ENCODE measurements at regions of chr4 and their contacts with region 1.

Region 1: DNA sequence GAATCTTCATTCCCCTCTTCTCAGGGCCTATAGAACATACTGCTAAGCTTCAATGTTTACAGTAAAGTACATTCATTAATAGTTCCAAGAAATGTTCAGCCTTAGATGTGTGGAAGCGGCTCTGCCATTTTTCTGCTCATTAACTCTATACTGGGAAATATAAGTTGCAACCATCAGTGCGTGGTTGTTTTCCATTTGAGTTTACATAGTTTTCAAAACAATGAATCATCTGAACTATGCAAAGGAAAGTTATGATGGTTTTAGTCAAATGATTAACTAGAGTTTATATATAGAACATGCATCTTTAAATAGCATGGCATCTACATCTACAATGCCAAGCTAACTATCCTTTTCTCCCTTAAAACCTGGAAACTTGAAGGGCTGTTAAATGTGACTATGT is 29.6 kb downstream of the LEF1 start:
- DNase-seq: peak; percentile 58
- H3K4me3 Mint-ChIP-seq: peak overlapping the region; percentile 84
- H3K27ac Mint-ChIP-seq: peak overlapping the region; percentile 97
- H3K4me1 Mint-ChIP-seq: peaks cover 84% of the 10 kb centered on the region
- H3K27me3 Mint-ChIP-seq: no peaks in the 10 kb centered on the region

Region 2: DNA sequence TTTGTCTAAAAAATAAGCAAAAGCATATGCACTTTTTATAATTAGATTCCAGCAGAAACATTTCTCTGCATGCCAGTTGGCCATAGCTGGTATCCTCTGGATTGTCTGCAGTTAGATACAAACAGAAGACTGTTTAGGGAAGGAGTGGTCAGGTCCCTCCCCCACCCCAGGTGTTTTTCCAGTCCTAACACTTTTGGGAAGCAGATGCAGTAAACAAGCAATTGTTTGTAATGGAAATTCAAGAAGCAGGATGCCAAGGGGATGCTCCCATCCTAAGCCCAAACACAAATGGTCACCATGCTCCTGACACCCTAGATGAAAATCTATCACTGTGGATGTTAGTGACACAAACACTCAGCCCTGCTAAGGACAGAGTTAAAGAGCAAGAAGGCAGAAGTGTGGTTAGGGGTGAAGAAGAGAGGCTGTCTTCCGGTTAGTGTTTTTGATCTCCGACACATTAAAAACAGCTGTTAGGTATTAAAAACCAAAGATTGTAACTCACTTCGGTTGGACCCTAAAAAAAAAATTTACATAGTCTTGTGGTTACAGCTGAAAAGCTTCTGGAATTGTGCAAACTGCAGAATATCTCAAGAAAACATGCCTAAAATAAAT is 21.8 kb after region 1 on chr4:
- intact Hi-C with region 1: loop called (anchors 1 kb)
- DNase-seq: peak; percentile 77
- H3K4me3 Mint-ChIP-seq: peak overlapping the region; percentile 75
- H3K27ac Mint-ChIP-seq: peak overlapping the region; percentile 61
- H3K4me1 Mint-ChIP-seq: peaks cover 66% of the 10 kb centered on the region
- H3K27me3 Mint-ChIP-seq: no peaks in the 10 kb centered on the region

Region 3: GRCh38 chr4:108954880-108955279 is 815.8 kb after region 1 on chr4:
- intact Hi-C with region 1: no loop called
- DNase-seq: no peak
- H3K4me3 Mint-ChIP-seq: no peak overlapping the region
- H3K27ac Mint-ChIP-seq: no peak overlapping the region
- H3K4me1 Mint-ChIP-seq: peaks cover 8% of the 10 kb centered on the region
- H3K27me3 Mint-ChIP-seq: peaks cover 13% of the 10 kb centered on the region